ENCODE measurements at regions of chr19 and their contacts with region 1.

Region 1: GRCh38 chr19:36125557-36125956 is 10.3 kb downstream of the TBCB start:
- DNase-seq: peak in 1 of 2 donors; percentile 23
- ATAC-seq: no peak
- H3K4me3 ChIP-seq: no peak overlapping the region
- H3K4me3 Mint-ChIP-seq: peak overlapping the region; percentile 28
- H3K27ac ChIP-seq: no peak overlapping the region
- H3K27ac Mint-ChIP-seq: no peak overlapping the region
- H3K4me1 ChIP-seq: peaks cover 18% of the 10 kb centered on the region
- H3K4me1 Mint-ChIP-seq: peaks cover 12 to 23% of the 10 kb centered on the region in 2 donors
- H3K27me3 ChIP-seq: no peaks in the 10 kb centered on the region
- H3K27me3 Mint-ChIP-seq: no peaks in the 10 kb centered on the region
- CTCF ChIP-seq: no peak

Region 2: DNA sequence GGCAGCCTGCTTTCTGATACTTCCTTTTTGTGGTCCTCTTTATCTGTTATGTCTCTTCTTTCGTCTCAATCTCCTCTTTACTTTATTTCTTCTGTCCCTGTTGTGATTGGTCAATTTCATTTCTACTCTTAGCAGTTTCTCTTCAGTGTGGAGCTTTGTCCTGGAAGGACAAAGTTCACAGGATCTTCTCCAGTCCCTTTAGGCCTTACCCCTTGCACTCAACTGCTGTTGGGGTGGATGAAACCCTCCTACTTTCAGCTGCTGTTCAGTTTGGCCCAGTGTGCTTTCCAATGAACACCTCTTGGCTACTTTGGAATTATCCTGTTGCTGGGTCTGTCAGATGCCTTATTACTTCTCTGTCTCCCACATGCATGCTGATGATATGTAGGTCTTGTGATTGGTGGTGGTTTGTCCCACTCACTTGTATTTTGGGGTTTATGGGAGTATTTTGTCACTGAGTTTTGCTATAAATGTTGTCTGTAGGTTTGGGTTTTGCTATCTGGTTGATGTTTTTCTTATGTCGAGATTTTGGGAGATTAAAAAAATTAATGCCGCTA is 46.1 kb before region 1 on chr19:
- intact Hi-C with region 1: loop called (anchors 1 kb)
- DNase-seq: no peak
- ATAC-seq: no peak
- H3K4me3 ChIP-seq: no peak overlapping the region
- H3K4me3 Mint-ChIP-seq: no peak overlapping the region
- H3K27ac ChIP-seq: no peak overlapping the region
- H3K27ac Mint-ChIP-seq: no peak overlapping the region
- H3K4me1 ChIP-seq: no peaks in the 10 kb centered on the region
- H3K4me1 Mint-ChIP-seq: no peaks in the 10 kb centered on the region
- H3K27me3 ChIP-seq: no peaks in the 10 kb centered on the region
- H3K27me3 Mint-ChIP-seq: no peaks in the 10 kb centered on the region
- CTCF ChIP-seq: no peak

Region 3: DNA sequence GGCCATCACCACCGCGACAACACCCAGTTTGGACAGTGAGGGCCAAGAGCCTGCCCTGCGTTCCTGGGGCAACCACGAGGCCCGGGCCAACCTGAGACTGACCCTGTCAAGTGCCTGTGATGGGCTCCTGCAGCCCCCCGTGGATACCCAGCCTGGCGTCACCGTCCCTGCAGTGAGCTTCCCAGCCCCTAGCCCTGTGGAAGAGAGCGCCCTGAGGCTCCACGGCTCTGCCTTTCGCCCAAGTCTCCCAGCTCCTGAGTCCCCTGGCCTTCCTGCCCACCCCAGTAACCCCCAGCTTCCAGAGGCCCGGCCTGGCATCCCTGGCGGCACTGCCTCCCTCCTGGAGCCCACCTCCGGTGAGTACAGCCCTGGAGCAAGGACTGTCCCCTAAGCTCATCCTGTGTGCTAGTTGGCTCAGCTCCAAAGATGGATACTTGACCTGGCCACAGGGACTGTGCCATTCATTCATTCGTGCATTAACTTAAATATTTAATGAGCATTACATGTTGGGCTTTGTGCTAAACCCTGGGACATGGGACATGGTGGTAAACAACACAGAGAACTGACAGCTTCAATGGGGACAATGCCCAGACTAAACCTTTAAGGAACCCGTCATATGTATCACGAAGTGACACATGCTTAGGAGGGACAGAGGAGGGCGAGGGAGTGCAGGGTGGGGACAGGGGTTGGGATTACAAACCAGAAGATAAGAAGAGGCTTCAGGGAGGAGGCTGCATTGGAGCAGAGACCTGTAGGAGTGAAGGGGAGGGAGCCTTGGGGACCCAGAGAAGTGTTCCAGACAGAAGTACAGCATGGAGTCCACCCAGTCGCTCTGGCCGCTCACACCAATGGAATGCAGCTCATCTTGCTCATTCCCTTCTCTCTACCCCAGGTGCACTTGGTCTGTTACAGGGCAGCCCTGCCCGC is 21.7 kb before region 1 on chr19:
- intact Hi-C with region 1: no loop called
- DNase-seq: no peak
- ATAC-seq: no peak
- H3K4me3 ChIP-seq: no peak overlapping the region
- H3K4me3 Mint-ChIP-seq: no peak overlapping the region
- H3K27ac ChIP-seq: no peak overlapping the region
- H3K27ac Mint-ChIP-seq: no peak overlapping the region
- H3K4me1 ChIP-seq: no peaks in the 10 kb centered on the region
- H3K4me1 Mint-ChIP-seq: no peaks in the 10 kb centered on the region
- H3K27me3 ChIP-seq: no peaks in the 10 kb centered on the region
- H3K27me3 Mint-ChIP-seq: no peaks in the 10 kb centered on the region
- CTCF ChIP-seq: no peak

Measured in natural killer cell (primary cell).